ENCODE measurements at regions of chr19 and their contacts with region 1.

Region 1: DNA sequence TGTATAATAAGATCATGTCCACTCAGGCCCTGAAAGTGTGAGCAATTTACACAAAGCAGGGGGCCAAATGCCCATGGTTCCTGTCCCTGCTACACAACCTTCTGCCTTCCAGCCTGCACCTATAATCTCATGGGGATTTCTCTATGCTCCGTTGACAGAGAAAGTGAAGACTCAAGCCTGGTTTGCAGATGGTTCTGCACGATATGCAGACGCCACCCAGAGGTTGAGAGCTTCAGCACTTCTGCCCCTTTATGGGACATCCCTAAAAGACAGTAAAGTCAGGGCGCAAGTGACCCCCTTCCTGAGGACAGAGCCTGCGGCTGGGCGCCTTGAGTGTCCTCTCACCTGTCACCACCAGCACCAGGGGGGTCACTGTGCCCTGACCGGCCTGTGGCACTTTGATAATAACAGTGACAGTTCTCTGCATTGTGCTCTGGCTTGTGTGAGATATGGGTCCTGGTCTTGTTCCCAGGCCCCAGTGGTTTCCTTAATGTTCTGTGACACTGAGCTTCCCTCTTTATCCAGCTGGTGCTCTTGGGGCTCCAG is 15.1 kb downstream of the LILRA5 start:
- DNase-seq: no peak
- H3K4me3 ChIP-seq: no peak overlapping the region
- H3K27ac ChIP-seq: no peak overlapping the region
- H3K4me1 ChIP-seq: no peaks in the 10 kb centered on the region
- H3K27me3 ChIP-seq: no peaks in the 10 kb centered on the region
- CTCF ChIP-seq: no peak

Region 2: GRCh38 chr19:53942001-53942786 is 355.6 kb before region 1 on chr19:
- intact Hi-C with region 1: no loop called
- DNase-seq: no peak
- H3K4me3 ChIP-seq: no peak overlapping the region
- H3K27ac ChIP-seq: no peak overlapping the region
- H3K4me1 ChIP-seq: no peaks in the 10 kb centered on the region
- H3K27me3 ChIP-seq: peaks cover 17% of the 10 kb centered on the region
- CTCF ChIP-seq: no peak

Region 3: DNA sequence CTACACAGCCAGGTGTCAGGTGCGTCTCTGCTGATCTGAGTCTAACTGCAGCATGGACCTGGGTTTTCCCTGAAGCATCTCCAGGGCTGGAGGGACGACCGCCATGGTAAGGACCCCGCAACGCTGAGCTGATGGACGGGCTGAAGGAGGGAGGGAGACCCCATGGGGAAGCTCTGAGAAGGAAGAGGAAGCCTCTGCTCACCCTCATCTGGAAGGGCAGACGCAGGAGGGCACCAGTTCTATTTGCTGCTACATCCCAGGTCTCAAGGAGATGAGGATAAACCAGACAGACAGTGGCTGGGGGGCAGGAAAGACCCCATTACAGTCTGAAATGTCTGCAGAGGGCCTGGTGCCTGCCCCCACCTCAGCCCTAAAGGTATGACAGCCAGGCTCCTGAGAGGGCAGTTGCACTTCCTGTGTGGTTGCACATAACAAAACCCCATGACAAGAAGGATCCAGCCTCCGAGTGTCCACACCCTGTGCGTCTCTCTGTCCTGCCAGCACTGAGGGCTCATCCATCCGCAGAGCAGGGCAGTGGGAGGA is 275.6 kb after region 1 on chr19 and contains the start of gene LILRA2:
- intact Hi-C with region 1: loop called (anchors 10 kb)
- DNase-seq: no peak
- H3K4me3 ChIP-seq: no peak within 1 kb of the TSS
- H3K27ac ChIP-seq: no peak within 1 kb of the TSS
- H3K4me1 ChIP-seq: no peaks in the 10 kb centered on the region
- H3K27me3 ChIP-seq: no peaks in the 10 kb centered on the region
- CTCF ChIP-seq: no peak
- total RNA-seq, gene LILRA2: 0.35 to 0.85 TPM

Measured in colonic mucosa (tissue), 4 donors.